ENCODE measurements at regions of chr2 and their contacts with region 1.

Region 1: GRCh38 chr2:241508240-241509154 is at the start of gene STK25:
- DNase-seq: peak; percentile 89 to 97 (median 92)
- ATAC-seq: peak; percentile 96
- H3K4me3 ChIP-seq: peak within 1 kb of the TSS; percentile 75
- H3K27ac ChIP-seq: peak within 1 kb of the TSS; percentile 94
- H3K4me1 ChIP-seq: peaks cover 13 to 39% of the 10 kb centered on the region in 2 experiments; a peak in 4 of 5 replicates
- H3K27me3 ChIP-seq: no peaks in the 10 kb centered on the region
- CTCF ChIP-seq: 0 out of 6 replicates have a peak, but pooled peaks of 1 of the 3 experiments have one; percentile 1
- EP300 ChIP-seq: no peak
- POLR2A ChIP-seq: peak; percentile 65
- RAD21 ChIP-seq: no peak
- polyA plus RNA-seq, gene STK25: 5.4 to 10.3 TPM

Region 2: GRCh38 chr2:241390301-241391206 is 117.9 kb before region 1 on chr2:
- CTCF ChIA-PET with region 1: no interaction called
- POLR2A ChIA-PET with region 1: no interaction called
- in situ Hi-C with region 1: no loop called
- intact Hi-C with region 1: no loop called
- DNase-seq: no peak
- ATAC-seq: no peak
- H3K4me3 ChIP-seq: no peak overlapping the region
- H3K27ac ChIP-seq: no peak overlapping the region
- H3K4me1 ChIP-seq: peaks cover 0 to 7% of the 10 kb centered on the region in 2 experiments; a peak in 2 of 5 replicates
- H3K27me3 ChIP-seq: no peaks in the 10 kb centered on the region
- CTCF ChIP-seq: no peak
- EP300 ChIP-seq: no peak
- POLR2A ChIP-seq: no peak
- RAD21 ChIP-seq: no peak

Region 3: DNA sequence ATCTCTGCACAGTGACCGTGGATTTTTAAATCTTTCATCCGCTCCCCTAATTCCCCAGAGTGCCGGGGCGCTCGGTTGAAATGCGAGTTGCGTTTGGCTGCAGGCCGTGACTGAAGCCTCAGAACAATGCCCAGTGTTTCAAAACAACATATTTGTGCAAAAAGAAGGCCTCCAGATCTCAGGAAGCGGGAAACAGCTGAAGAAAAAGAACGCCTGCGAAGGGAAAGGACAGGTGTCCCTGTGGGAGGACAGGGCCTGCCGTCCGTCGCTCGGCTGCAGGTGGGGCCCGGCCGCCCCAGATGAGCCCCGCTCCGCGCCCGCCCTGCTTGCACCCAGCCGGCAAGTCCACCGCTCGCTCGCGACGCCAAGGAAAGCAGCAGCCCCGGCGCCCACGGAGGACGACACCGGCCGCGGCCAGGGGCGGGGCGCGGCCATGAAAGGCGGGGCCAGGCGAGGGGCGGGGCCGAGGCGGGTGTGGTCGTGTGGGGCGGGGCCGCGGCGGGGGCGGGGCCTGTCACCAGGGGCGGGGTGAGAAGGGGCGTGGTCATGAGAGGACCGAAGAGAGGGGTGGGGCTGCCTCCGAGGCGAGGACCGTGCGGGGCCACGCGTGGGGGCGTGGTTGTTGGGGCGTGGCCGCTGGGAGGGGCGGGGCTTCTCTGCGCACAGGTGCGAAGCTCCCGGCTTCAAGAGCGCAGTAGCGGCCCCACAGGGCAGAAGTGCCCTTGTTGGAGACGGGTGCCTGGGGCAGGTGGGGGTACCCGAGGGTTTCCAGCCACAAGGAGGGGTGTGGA is 32.5 kb after region 1 on chr2:
- CTCF ChIA-PET with region 1: no interaction called
- POLR2A ChIA-PET with region 1: interaction called, 3 read pairs
- in situ Hi-C with region 1: no loop called
- intact Hi-C with region 1: loop called (anchors 2 kb)
- DNase-seq: peak; percentile 87 to 99 (median 98)
- ATAC-seq: peak; percentile 90
- H3K4me3 ChIP-seq: peak overlapping the region; percentile 52
- H3K27ac ChIP-seq: peak overlapping the region; percentile 16; the same call in 1 of the 3 replicates
- H3K4me1 ChIP-seq: peaks cover 19 to 49% of the 10 kb centered on the region in 2 experiments
- H3K27me3 ChIP-seq: no peaks in the 10 kb centered on the region; a peak in 1 of 5 replicates
- CTCF ChIP-seq: no peak
- EP300 ChIP-seq: no peak
- POLR2A ChIP-seq: peak; percentile 55; the same call in 1 of the 2 replicates
- RAD21 ChIP-seq: no peak